ENCODE measurements at regions of chr10 and their contacts with region 1.

Region 1: DNA sequence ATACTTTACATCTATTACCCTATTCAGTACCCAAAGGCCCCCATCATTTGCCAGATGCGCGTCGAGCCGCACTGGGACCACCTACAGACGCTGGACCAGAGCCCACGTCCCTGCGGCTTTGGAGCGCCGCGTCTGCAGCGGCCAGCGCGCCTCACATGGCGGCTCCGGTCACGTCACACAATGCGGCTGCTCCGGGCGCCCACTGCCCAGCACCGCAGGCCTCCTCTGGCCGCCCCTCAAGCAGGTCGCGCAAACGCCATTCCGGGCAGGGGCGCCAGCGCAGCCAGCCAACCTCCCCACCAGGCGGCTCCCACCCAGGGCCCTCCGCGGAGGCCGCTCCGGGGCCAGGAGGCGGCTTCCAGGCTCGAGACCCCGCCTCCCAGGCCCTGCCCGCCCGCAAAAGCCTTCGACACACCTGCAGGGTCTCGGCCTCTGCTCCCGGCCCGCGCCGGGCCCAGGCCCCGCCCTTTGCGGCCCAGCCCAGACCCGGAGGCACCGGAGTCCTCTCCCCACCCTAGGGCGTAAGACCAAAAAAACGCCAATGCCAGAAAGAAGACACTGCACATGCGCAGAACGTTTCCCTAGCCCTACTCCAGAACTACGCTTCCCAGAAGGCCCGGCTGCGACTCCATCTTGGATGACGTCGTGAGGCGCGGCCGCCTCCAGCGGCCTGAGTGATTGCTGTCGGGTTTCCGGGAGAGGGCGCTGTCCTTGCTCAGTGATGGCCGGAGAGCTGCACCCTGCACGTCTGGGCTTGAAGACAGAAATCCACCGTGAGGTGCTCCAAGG is at the start of gene ZNF25:
- DNase-seq: peak; percentile 93
- ATAC-seq: peak; percentile 91
- H3K4me3 Mint-ChIP-seq: peak within 1 kb of the TSS; percentile 90
- H3K27ac Mint-ChIP-seq: peak within 1 kb of the TSS; percentile 95
- H3K4me1 Mint-ChIP-seq: peaks cover 19% of the 10 kb centered on the region
- H3K27me3 Mint-ChIP-seq: no peaks in the 10 kb centered on the region
- CTCF ChIP-seq: peak; percentile 24
- total RNA-seq, gene ZNF25: 3.2 and 3.5 TPM in 2 replicates

Region 2: DNA sequence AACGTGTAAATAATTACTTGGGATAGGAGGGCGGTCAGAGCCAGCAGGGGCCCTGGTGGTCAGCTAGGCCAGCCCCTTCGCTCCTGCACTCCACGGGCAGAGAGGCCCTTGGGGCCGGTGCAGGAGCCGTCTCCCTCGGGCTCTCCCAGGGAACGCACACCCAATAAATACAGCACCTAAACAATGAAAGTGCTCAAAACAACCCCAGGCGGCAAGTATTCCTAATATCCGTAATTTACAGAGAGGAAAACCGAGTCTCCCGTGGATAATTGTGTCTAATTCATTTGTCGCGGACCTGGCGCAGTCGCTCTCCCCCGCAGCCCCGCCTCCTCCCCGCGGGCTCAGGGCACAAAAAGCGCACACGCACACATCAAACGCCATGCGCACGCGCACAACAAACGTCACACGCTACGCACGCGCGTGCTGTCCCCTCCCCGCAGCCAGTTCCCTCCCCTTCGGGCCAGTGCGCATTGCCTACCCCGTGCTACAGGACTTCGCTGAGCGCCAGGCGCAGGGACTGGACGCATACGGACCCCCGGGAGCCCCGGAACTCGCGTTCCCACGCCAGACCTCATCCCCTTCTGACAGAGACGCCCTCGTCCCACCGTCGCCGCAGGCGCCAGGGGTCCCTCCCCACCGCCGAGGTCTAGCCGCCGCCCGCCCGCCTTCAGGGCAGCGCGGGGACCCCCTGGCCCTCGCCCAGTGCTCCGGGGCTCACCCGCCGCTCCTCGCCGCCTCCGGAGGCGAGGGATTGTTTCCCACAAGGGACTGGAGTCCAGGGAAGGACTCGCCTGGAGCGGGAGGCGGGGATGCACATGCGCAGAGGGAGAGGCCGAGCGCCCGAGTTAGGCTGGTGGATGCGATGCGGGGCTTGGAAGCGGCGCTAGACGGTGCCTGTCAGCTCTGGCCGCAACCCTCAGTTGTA is 118.7 kb before region 1 on chr10 and contains the start of gene ZNF248:
- CTCF ChIA-PET with region 1: no interaction called
- POLR2A ChIA-PET with region 1: interaction called, 5 read pairs
- intact Hi-C with region 1: loop called (anchors 1 kb)
- DNase-seq: peak; percentile 91
- ATAC-seq: peak; percentile 96
- H3K4me3 Mint-ChIP-seq: peak within 1 kb of the TSS; percentile 95
- H3K27ac Mint-ChIP-seq: peak within 1 kb of the TSS; percentile 93
- H3K4me1 Mint-ChIP-seq: peaks cover 31% of the 10 kb centered on the region
- H3K27me3 Mint-ChIP-seq: no peaks in the 10 kb centered on the region
- CTCF ChIP-seq: no peak
- total RNA-seq, gene ZNF248: 9.2 and 12.1 TPM in 2 replicates

Region 3: DNA sequence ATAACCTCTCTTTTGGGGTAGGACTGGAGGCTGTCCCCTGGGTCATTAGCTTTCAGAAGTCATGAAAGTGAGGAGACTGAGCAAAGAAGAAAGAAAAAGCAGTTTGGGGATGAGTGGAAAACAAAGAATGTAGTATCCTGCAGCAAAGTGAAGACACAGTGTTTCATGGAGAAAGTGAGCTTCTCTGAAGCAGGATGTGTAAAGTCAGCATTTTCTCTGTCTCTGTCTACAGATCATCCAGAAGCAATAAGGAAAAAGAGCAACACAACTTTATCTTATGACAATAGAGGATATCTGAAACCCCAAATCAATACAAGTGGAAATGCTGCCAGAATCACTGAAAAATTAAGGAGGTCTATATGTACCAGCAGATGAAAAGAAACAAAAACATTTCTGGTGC is 90.4 kb before region 1 on chr10:
- CTCF ChIA-PET with region 1: no interaction called
- POLR2A ChIA-PET with region 1: no interaction called
- intact Hi-C with region 1: no loop called
- DNase-seq: no peak
- ATAC-seq: no peak
- H3K4me3 Mint-ChIP-seq: no peak overlapping the region
- H3K27ac Mint-ChIP-seq: no peak overlapping the region
- H3K4me1 Mint-ChIP-seq: no peaks in the 10 kb centered on the region
- H3K27me3 Mint-ChIP-seq: no peaks in the 10 kb centered on the region
- CTCF ChIP-seq: no peak